ENCODE measurements at regions of chr4 and their contacts with region 1.

Region 1: DNA sequence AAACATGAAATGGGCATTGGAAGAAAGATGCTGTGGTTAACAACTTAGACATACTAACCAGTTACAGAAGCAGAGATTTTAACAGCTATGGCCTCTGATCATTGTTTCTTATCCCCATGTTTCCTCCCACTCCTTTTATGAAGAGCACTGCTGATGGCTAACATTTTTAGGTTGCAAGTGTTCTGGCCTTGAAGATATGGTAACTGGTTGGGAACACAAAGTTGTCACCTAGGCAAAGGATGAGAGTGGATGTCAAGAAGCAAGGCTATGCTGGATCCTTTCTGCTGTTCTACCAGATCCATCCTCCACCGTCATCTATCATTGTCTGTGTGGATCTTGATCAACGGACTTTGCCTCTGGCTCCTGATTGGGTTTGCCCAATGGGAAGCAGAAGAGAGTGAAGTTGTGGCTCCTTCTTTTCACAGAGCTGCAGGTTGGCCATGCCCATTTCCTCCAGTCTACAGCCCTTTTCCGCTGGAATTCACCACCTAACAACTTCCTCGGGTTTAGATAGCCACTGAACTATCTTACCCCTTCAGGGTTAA is 48.9 kb upstream of the SPP1 start:
- DNase-seq: no peak
- ATAC-seq: no peak

Region 2: GRCh38 chr4:87688316-87688715 is 238.3 kb before region 1 on chr4:
- intact Hi-C with region 1: no loop called
- DNase-seq: no peak
- ATAC-seq: no peak

Region 3: GRCh38 chr4:87937523-87937922 is 10.9 kb after region 1 on chr4:
- intact Hi-C with region 1: loop called (anchors 1 kb)
- DNase-seq: no peak
- ATAC-seq: no peak